Dendritic cell treated with granulocyte-macrophage colony-stimulating factor and Interleukin-4, amounts not matched to agents 40 ng/mL and 50 ng/mL, for 4 days (primary cell): ENCODE measurements at regions of chr9 and their contacts with region 1.

Region 1: GRCh38 chr9:127586537-127586936 is 25.5 kb upstream of the STXBP1 start:
- H3K4me3 Mint-ChIP-seq: peak overlapping the region; percentile 53
- H3K27ac Mint-ChIP-seq: peak overlapping the region; percentile 10
- H3K4me1 Mint-ChIP-seq: peaks cover 61% of the 10 kb centered on the region
- H3K27me3 Mint-ChIP-seq: no peaks in the 10 kb centered on the region

Region 2: DNA sequence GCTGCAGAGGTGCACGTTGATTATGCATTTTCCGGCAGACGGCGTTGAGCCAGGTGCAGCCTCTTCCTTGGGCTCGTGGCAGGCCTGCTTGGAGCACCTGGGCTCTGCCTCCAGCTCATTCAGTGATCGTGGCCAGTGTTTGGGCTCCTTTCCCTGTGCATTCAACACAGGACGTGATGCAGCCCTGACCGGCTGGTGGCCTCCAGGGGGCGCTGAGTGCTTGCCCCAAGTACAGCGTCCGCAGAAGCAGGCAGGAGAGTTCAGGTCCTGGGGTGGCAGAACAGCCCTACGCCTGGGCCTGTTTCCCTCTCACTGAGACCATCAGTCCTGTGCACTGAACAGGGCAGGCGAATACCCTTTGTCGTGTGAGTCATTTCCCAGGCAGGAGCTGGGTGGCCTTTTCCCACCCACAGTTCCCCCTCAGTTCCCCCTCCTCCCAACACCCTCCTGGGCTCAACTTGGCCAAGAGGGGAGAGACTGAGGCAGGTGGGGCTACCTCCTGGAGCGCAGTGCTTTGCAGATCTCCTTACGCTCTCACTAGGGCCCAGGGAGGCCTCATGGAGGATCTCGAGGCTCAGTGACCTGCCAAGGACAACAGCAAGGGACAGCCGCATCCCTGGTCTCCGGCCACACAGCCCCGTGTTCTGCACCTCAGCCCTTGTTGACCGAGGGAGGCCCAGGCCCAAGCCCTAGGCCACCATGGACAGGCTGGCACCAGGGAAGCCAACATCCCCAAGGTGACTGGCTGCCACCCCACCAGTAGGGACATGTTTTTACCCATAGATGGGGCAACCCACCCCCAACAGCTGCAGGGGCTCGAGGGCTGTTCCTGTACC is 82.4 kb before region 1 on chr9:
- intact Hi-C with region 1: loop called (anchors 1 kb)
- H3K4me3 Mint-ChIP-seq: no peak overlapping the region
- H3K27ac Mint-ChIP-seq: no peak overlapping the region
- H3K4me1 Mint-ChIP-seq: no peaks in the 10 kb centered on the region
- H3K27me3 Mint-ChIP-seq: no peaks in the 10 kb centered on the region

Region 3: DNA sequence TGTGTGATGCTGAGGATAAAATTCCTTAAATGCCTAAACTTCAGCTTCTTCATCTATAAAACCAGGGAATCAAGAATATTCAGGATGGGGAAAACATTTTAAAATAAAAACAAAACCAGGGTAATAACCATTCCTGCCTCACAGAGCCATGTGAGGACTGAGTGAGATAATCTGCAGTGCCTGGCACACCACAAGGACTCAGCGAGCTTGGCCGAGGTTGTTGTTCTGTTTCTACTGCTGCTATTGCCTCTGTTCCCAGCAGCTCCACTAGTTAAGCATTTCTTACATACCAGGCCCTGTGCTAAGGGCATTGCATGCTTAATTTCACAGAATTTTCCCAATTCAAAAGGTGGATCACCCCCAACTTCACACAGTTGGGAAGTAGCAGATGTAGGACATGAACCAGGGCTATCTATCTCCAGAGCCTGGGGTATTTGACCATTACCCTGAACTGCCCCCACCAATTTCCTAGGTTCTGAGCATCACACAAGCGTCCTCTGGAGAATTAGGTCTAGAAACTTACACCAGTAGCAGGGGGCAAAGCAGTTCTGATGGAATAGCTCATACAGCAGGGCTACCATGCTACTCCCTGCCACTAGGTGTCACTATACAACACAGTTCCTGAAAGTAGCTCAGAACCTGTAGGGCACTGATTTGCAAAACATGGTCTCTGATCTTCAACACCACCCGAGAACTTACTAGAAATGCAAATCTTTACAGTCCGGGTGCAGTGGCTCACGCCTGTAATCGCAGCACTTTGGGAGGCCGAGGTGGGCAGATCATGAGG is 60.9 kb before region 1 on chr9:
- intact Hi-C with region 1: loop called (anchors 5 kb)
- H3K4me3 Mint-ChIP-seq: no peak overlapping the region
- H3K27ac Mint-ChIP-seq: peak overlapping the region; percentile 43
- H3K4me1 Mint-ChIP-seq: peaks cover 64% of the 10 kb centered on the region
- H3K27me3 Mint-ChIP-seq: no peaks in the 10 kb centered on the region

Region 4: GRCh38 chr9:127545196-127546124 is 41.1 kb before region 1 on chr9:
- intact Hi-C with region 1: loop called (anchors 5 kb)
- H3K4me3 Mint-ChIP-seq: peak overlapping the region; percentile 17
- H3K27ac Mint-ChIP-seq: peak overlapping the region; percentile 71
- H3K4me1 Mint-ChIP-seq: peaks cover 94% of the 10 kb centered on the region
- H3K27me3 Mint-ChIP-seq: no peaks in the 10 kb centered on the region

Region 5: GRCh38 chr9:127568971-127569885 is 17.3 kb before region 1 on chr9:
- intact Hi-C with region 1: loop called (anchors 2 kb)
- H3K4me3 Mint-ChIP-seq: peak overlapping the region; percentile 79
- H3K27ac Mint-ChIP-seq: peak overlapping the region; percentile 100
- H3K4me1 Mint-ChIP-seq: peaks cover 75% of the 10 kb centered on the region
- H3K27me3 Mint-ChIP-seq: no peaks in the 10 kb centered on the region

Region 6: GRCh38 chr9:127608104-127608966 is 21.8 kb after region 1 on chr9:
- intact Hi-C with region 1: no loop called
- H3K4me3 Mint-ChIP-seq: peak overlapping the region; percentile 76
- H3K27ac Mint-ChIP-seq: no peak overlapping the region
- H3K4me1 Mint-ChIP-seq: peaks cover 49% of the 10 kb centered on the region
- H3K27me3 Mint-ChIP-seq: peaks cover 33% of the 10 kb centered on the region